ENCODE measurements at regions of chr16 and their contacts with region 1.

Region 1: GRCh38 chr16:81940781-81941560 is 70.3 kb downstream of the SDR42E1 start:
- DNase-seq: peak; percentile 57 to 73
- ATAC-seq: peak; percentile 72 to 86
- H3K4me3 ChIP-seq: no peak overlapping the region
- H3K27ac ChIP-seq: no peak overlapping the region
- H3K4me1 ChIP-seq: peaks cover 6% of the 10 kb centered on the region; the same call in 2 of the 3 replicates
- CTCF ChIP-seq: peak; percentile 72
- EP300 ChIP-seq: no peak
- POLR2A ChIP-seq: no peak
- RAD21 ChIP-seq: peak; percentile 78 to 80

Region 2: DNA sequence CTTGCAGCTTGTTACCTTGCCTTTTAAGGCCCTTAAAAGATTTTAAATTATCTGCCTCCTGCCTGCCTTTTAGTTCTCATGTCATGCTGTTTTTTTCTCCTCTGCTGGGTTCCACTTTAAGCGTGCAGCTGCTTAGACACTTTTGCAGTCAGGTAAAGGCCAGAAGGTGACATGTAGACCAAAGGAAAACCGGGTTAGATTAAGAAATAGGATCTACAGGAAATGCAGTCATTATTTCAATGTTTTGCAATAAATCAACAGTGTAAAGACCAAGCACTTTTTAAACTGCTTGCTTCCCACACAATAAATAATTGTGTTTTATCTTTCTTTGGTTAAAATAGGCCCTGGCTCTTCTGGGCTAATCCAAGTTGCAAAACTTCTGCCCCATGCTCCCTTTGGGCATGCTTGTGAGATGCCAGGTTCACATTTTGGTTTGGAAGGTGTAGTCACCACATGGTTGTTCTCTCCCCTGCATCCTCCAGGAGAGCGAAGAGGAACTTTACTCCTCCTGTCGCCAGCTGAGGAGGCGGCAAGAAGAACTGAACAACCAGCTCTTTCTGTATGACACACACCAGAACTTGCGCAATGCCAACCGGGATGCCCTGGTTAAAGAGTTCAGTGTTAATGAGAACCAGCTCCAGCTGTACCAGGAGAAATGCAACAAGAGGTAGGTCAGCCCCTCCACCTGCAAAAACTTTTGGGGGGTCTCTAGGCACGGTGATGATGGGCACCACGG is 15.4 kb after region 1 on chr16:
- CTCF ChIA-PET with region 1: interaction called, 16 read pairs
- POLR2A ChIA-PET with region 1: no interaction called
- DNase-seq: no peak
- ATAC-seq: no peak
- H3K4me3 ChIP-seq: no peak overlapping the region
- H3K27ac ChIP-seq: no peak overlapping the region
- H3K4me1 ChIP-seq: no peaks in the 10 kb centered on the region
- CTCF ChIP-seq: no peak
- EP300 ChIP-seq: no peak
- POLR2A ChIP-seq: no peak
- RAD21 ChIP-seq: no peak

Region 3: GRCh38 chr16:81996664-81997622 is 56.0 kb after region 1 on chr16:
- CTCF ChIA-PET with region 1: interaction called, 31 read pairs
- POLR2A ChIA-PET with region 1: no interaction called
- DNase-seq: peak; percentile 51 to 58
- ATAC-seq: peak; percentile 87 to 90
- H3K4me3 ChIP-seq: no peak overlapping the region; the same call in 2 of the 3 replicates
- H3K27ac ChIP-seq: peak overlapping the region; percentile 40 to 65
- H3K4me1 ChIP-seq: peaks cover 20% of the 10 kb centered on the region
- CTCF ChIP-seq: peak; percentile 32; the same call in 2 of the 3 replicates
- EP300 ChIP-seq: no peak
- POLR2A ChIP-seq: no peak
- RAD21 ChIP-seq: peak in 1 of 2 experiments; percentile 17; a peak in 2 of 5 replicates

Region 4: DNA sequence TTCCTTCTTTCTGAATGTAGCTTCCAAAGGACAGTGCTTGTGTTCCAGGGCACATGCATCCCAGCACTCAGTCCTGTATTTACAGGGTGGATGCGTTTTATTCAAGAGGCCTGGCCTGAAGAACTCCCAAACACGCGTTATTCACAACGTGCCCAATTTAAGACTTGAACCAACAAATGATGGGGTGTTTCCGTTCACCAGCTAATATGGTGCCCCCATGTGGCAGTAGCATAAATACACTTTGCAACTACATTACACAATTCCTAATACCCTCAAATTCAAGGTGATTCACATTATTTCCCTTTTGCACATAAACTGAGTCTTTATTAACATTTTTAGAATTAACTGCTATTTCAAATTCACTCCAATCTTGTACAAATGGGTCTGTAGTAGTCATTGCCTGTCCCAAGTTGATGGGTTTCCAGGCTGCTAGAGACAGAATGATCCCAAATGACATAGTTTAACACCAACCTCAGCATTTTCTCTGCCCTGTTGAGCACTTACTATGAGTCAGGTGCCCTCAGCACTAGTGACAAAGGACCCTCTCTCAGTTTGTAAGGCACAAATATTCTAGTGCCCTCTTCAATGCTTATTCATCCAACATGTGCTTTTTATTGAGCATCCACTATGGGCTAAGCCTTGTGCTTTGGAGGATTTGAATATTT is 121.0 kb after region 1 on chr16:
- CTCF ChIA-PET with region 1: interaction called, 12 read pairs
- POLR2A ChIA-PET with region 1: no interaction called
- DNase-seq: peak; percentile 47 to 57
- ATAC-seq: peak; percentile 42 to 67; a peak in 3 of 6 replicates
- H3K4me3 ChIP-seq: no peak overlapping the region
- H3K27ac ChIP-seq: no peak overlapping the region
- H3K4me1 ChIP-seq: no peaks in the 10 kb centered on the region
- CTCF ChIP-seq: peak; percentile 59
- EP300 ChIP-seq: no peak
- POLR2A ChIP-seq: no peak
- RAD21 ChIP-seq: peak; percentile 46 to 53; a peak in 4 of 5 replicates

Measured in A549 (cell line).